Lower leg skin (tissue), 4 donors: ENCODE measurements at regions of chr2 and their contacts with region 1.

Region 1: DNA sequence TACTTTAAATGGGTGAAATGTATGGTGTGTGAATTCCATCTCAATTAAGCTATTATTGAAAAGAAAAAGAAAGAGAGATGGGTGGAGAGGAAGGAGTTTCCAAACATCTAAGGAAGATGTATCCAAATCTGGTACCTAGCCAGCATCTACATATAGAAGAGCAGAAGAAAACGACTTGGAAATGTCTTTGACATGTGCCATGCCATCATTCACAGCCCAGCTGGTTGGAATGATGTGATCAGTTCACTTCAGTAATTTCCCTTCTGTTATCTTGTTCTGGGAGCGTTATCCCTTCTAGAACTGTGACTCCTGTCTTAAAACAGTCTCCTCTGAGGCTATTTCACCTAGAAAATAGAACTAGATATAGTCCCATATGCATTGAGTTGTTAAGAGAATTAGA is 312.8 kb upstream of the GYPC start:
- DNase-seq: no peak
- H3K4me3 ChIP-seq: no peak overlapping the region
- CTCF ChIP-seq: no peak
- POLR2A ChIP-seq: no peak

Region 2: GRCh38 chr2:126403039-126403628 is 60.0 kb after region 1 on chr2:
- intact Hi-C with region 1: loop called (anchors 2 kb)
- DNase-seq: no peak
- H3K4me3 ChIP-seq: no peak overlapping the region
- CTCF ChIP-seq: no peak
- POLR2A ChIP-seq: no peak

Region 3: DNA sequence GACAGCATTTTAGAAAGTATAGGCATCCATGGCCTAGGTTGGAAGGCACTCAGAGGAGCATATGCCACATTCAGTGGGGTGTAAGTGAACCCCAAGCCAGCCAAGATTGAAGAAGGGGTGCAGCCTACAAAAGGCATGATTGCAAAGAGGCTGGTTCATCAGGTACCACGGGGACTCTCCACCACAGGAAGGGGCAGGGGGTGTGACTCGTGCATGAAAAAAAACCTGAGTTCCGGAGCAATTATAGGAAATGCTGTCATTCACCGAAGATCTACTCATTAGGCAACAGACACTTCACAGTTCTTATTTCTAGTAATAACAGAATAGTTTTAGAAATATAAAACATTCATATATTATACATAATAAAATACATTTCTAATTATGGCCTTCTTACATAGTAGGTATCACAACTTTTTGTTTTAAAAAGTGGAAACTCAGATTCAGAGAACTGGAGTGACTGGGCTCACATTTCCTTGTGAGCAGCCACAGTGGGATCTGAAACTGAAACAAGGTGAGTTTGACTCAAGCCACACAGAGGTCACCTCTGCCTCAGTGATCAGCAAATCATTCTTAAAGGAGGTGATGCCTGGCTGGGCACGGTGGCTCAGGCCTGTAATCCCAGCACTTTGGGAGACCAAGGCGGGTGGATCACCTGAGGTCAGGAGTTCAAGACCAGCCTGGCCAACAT is 124.4 kb after region 1 on chr2:
- intact Hi-C with region 1: no loop called
- DNase-seq: peak in 1 of 2 donors; percentile 46
- H3K4me3 ChIP-seq: no peak overlapping the region
- CTCF ChIP-seq: no peak
- POLR2A ChIP-seq: no peak